Natural killer cell (primary cell): ENCODE measurements at regions of chrX and their contacts with region 1.

Region 1: GRCh38 chrX:16826207-16826606 is 39.9 kb downstream of the TXLNG start:
- DNase-seq: peak in 1 of 2 donors; percentile 47
- ATAC-seq: peak in 2 of 3 donors; percentile 42 to 55
- H3K4me3 ChIP-seq: no peak overlapping the region
- H3K4me3 Mint-ChIP-seq: no peak overlapping the region
- H3K27ac ChIP-seq: no peak overlapping the region
- H3K27ac Mint-ChIP-seq: no peak overlapping the region
- H3K4me1 ChIP-seq: no peaks in the 10 kb centered on the region
- H3K4me1 Mint-ChIP-seq: no peaks in the 10 kb centered on the region
- H3K27me3 ChIP-seq: no peaks in the 10 kb centered on the region
- H3K27me3 Mint-ChIP-seq: no peaks in the 10 kb centered on the region
- CTCF ChIP-seq: peak; percentile 48

Region 2: DNA sequence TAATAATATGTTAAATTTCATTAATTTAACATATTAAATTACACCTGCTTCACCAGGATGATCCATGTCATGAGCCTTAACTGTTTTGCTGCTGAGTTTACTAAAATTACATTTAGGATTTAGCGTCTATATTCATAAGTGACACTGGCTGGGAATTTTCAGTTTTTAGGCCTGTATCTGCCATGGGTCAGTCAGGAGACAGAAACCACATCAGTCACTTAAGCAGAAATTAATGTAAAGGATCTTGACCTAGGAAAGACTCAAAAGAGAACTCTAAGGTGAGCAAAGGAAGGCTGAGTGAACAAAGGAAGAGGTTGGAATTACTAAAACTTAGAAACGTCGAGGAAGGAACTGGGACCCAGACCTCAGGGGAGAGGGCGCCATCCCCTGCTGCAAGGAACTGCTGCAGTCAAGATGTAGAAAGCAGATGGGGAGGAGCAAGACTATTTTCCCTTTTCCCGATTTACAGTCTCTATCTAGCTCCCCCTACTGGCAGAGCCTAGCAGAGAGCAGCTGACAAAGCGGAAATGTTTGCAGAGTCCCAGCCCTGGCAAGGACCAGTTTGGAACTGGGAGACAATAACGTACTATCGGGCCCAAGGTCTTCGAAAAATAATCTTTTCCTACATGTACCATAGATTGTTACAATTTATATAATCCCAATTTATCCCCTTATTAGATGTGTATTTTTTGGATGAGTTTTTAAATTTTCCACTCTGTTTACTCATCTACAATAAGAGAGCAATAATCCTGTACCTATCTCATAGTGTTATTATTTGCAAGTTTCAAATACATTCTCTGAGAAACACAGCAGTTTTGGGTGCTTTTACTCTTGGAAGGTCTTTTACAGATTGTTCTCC is 66.5 kb after region 1 on chrX:
- intact Hi-C with region 1: loop called (anchors 2 kb)
- DNase-seq: peak; percentile 19 to 81
- ATAC-seq: peak; percentile 63 to 88 (median 84)
- H3K4me3 ChIP-seq: no peak overlapping the region
- H3K4me3 Mint-ChIP-seq: no peak overlapping the region
- H3K27ac ChIP-seq: no peak overlapping the region
- H3K27ac Mint-ChIP-seq: no peak overlapping the region
- H3K4me1 ChIP-seq: no peaks in the 10 kb centered on the region
- H3K4me1 Mint-ChIP-seq: peaks cover 5 to 6% of the 10 kb centered on the region in 2 donors
- H3K27me3 ChIP-seq: no peaks in the 10 kb centered on the region
- H3K27me3 Mint-ChIP-seq: peaks cover 3 to 7% of the 10 kb centered on the region in 2 donors
- CTCF ChIP-seq: peak; percentile 78